CD4-positive, alpha-beta memory T cell (primary cell): ENCODE measurements at regions of chr2 and their contacts with region 1.

Region 1: DNA sequence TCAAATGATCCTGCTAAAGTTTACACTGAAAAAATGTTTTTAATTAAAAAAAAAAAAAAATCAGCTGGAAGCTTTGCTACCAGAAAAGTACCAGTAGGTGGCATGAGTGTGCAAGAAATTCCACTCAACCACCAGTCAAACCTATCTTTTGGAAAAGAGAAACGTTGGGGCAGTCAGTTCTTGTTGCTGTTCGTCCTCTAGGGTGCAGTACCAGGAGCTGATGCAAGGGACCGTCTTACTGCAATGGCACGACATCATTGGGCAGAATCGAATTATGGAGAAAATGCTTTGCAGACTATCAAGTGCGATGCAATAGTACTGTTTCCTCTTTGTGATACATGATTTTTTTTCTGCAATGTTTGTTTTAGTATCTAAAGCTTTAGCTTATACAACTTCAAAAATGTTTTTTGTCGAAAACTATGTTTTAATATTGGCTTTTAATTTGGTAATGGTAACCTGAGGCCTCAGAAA is 18.3 kb downstream of the YPEL5 start:
- DNase-seq: peak; percentile 77 to 85 (median 83)
- H3K4me3 ChIP-seq: no peak overlapping the region
- H3K4me3 Mint-ChIP-seq: peak overlapping the region in 1 of 8 donors; percentile 17
- H3K27ac ChIP-seq: no peak overlapping the region
- H3K27ac Mint-ChIP-seq: peak overlapping the region in 2 of 7 donors; percentile 47 to 88
- H3K4me1 ChIP-seq: peaks cover 4% of the 10 kb centered on the region
- H3K4me1 Mint-ChIP-seq: peaks cover 0 to 10% (median 3%) of the 10 kb centered on the region in 4 donors
- H3K27me3 ChIP-seq: no peaks in the 10 kb centered on the region
- H3K27me3 Mint-ChIP-seq: no peaks in the 10 kb centered on the region

Region 2: DNA sequence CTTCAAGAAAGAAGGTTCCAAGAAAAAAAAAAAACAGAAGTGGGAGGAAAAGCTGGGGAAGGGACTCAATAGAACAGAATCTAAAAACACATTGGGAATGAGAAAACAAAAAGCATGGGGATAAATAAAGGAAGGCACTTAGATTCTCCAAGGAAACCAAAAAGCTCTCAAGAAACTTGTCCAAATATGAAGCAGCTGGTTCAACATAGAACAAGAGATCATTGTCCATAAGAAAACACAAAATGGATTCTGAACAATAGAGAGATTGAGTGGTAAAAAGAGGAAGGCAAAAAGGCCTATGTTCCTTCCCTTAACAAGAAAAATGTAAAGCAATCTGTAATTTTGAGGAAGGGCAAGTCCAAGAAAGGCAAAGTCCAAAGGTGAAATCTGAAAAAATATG is 210.8 kb before region 1 on chr2:
- CTCF ChIA-PET with region 1: no interaction called
- POLR2A ChIA-PET with region 1: no interaction called
- intact Hi-C with region 1: no loop called
- DNase-seq: no peak
- H3K4me3 ChIP-seq: no peak overlapping the region
- H3K4me3 Mint-ChIP-seq: no peak overlapping the region
- H3K27ac ChIP-seq: no peak overlapping the region
- H3K27ac Mint-ChIP-seq: no peak overlapping the region
- H3K4me1 ChIP-seq: no peaks in the 10 kb centered on the region
- H3K4me1 Mint-ChIP-seq: no peaks in the 10 kb centered on the region
- H3K27me3 ChIP-seq: peaks cover 6% of the 10 kb centered on the region
- H3K27me3 Mint-ChIP-seq: peaks cover 8 to 10% of the 10 kb centered on the region in 2 donors

Region 3: GRCh38 chr2:30115141-30115980 is 49.7 kb before region 1 on chr2:
- CTCF ChIA-PET with region 1: interaction called, 14 read pairs
- POLR2A ChIA-PET with region 1: no interaction called
- intact Hi-C with region 1: no loop called
- DNase-seq: peak in 4 of 5 donors; percentile 27 to 45 (median 36)
- H3K4me3 ChIP-seq: no peak overlapping the region
- H3K4me3 Mint-ChIP-seq: peak overlapping the region in 1 of 8 donors; percentile 51
- H3K27ac ChIP-seq: no peak overlapping the region
- H3K27ac Mint-ChIP-seq: peak overlapping the region in 4 of 7 donors; percentile 5 to 20 (median 10)
- H3K4me1 ChIP-seq: no peaks in the 10 kb centered on the region
- H3K4me1 Mint-ChIP-seq: peaks cover 0 to 5% (median 3%) of the 10 kb centered on the region in 4 donors
- H3K27me3 ChIP-seq: no peaks in the 10 kb centered on the region
- H3K27me3 Mint-ChIP-seq: peaks cover 8 to 11% of the 10 kb centered on the region in 2 donors

Region 4: GRCh38 chr2:30178618-30179434 is 13.7 kb after region 1 on chr2:
- CTCF ChIA-PET with region 1: interaction called, 16 read pairs
- POLR2A ChIA-PET with region 1: no interaction called
- intact Hi-C with region 1: no loop called
- DNase-seq: no peak
- H3K4me3 ChIP-seq: no peak overlapping the region
- H3K4me3 Mint-ChIP-seq: no peak overlapping the region
- H3K27ac ChIP-seq: no peak overlapping the region
- H3K27ac Mint-ChIP-seq: peak overlapping the region in 1 of 7 donors; percentile 52
- H3K4me1 ChIP-seq: no peaks in the 10 kb centered on the region
- H3K4me1 Mint-ChIP-seq: peaks cover 0 to 7% (median 0%) of the 10 kb centered on the region in 4 donors
- H3K27me3 ChIP-seq: no peaks in the 10 kb centered on the region
- H3K27me3 Mint-ChIP-seq: peaks cover 0 to 4% of the 10 kb centered on the region in 2 donors

Region 5: GRCh38 chr2:30231212-30231995 is 66.3 kb after region 1 on chr2 and contains the start of gene LBH:
- CTCF ChIA-PET with region 1: interaction called, 18 read pairs
- POLR2A ChIA-PET with region 1: interaction called, 15 read pairs
- intact Hi-C with region 1: loop called (anchors 1 kb)
- DNase-seq: peak; percentile 88 to 91 (median 89)
- H3K4me3 ChIP-seq: peak within 1 kb of the TSS; percentile 63 to 92
- H3K4me3 Mint-ChIP-seq: peak within 1 kb of the TSS; percentile 89 to 99 (median 96)
- H3K27ac ChIP-seq: peak within 1 kb of the TSS; percentile 93
- H3K27ac Mint-ChIP-seq: peak within 1 kb of the TSS; percentile 87 to 97 (median 91)
- H3K4me1 ChIP-seq: peaks cover 64% of the 10 kb centered on the region
- H3K4me1 Mint-ChIP-seq: peaks cover 36 to 76% (median 55%) of the 10 kb centered on the region in 4 donors
- H3K27me3 ChIP-seq: no peaks in the 10 kb centered on the region
- H3K27me3 Mint-ChIP-seq: no peaks in the 10 kb centered on the region
- total RNA-seq, gene LBH: 335 to 364 TPM

Region 6: GRCh38 chr2:30472326-30472725 is 307.2 kb after region 1 on chr2:
- CTCF ChIA-PET with region 1: interaction called, 15 read pairs
- POLR2A ChIA-PET with region 1: no interaction called
- intact Hi-C with region 1: loop called (anchors 2 kb)
- DNase-seq: no peak
- H3K4me3 ChIP-seq: no peak overlapping the region
- H3K4me3 Mint-ChIP-seq: no peak overlapping the region
- H3K27ac ChIP-seq: no peak overlapping the region
- H3K27ac Mint-ChIP-seq: peak overlapping the region in 1 of 7 donors; percentile 51
- H3K4me1 ChIP-seq: no peaks in the 10 kb centered on the region
- H3K4me1 Mint-ChIP-seq: peaks cover 12 to 17% (median 15%) of the 10 kb centered on the region in 4 donors
- H3K27me3 ChIP-seq: no peaks in the 10 kb centered on the region
- H3K27me3 Mint-ChIP-seq: no peaks in the 10 kb centered on the region

Region 7: DNA sequence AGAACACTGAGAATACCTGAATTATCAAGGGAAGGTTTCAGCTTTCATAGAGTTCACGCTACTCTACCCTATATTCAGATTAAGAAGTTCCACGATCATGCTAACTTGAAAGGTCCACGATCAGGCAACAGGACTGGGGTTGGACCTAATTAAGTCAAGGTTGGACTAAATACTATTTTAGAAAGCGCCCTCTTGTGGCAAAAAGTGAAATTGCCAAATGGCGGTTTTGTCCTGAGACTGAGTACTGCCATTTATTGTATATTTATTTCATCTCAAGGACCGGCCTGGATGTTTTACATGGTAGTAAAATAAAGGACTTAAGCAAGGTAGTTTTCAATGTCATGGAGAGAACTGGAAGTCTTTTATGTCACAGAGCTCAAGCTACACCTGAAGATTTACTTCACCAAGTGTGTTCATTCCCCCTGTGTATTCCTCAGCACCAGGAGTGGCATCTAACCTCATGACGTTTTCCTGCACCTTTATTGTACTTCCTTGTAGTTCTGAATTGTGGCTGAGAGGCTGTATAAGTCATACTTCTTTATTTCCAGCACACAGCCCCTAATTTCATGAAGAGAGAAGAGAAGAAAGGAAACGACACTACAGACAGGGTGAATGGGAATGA is 1358.9 kb after region 1 on chr2:
- CTCF ChIA-PET with region 1: interaction called, 3 read pairs
- POLR2A ChIA-PET with region 1: no interaction called
- intact Hi-C with region 1: loop called (anchors 10 kb)
- DNase-seq: peak in 4 of 5 donors; percentile 26 to 46 (median 42)
- H3K4me3 ChIP-seq: no peak overlapping the region
- H3K4me3 Mint-ChIP-seq: no peak overlapping the region
- H3K27ac ChIP-seq: no peak overlapping the region
- H3K27ac Mint-ChIP-seq: no peak overlapping the region
- H3K4me1 ChIP-seq: no peaks in the 10 kb centered on the region
- H3K4me1 Mint-ChIP-seq: no peaks in the 10 kb centered on the region
- H3K27me3 ChIP-seq: no peaks in the 10 kb centered on the region
- H3K27me3 Mint-ChIP-seq: peaks cover 7 to 18% of the 10 kb centered on the region in 2 donors